Heart right ventricle (tissue), 16 donors: ENCODE measurements at regions of chr2 and their contacts with region 1.

Region 1: DNA sequence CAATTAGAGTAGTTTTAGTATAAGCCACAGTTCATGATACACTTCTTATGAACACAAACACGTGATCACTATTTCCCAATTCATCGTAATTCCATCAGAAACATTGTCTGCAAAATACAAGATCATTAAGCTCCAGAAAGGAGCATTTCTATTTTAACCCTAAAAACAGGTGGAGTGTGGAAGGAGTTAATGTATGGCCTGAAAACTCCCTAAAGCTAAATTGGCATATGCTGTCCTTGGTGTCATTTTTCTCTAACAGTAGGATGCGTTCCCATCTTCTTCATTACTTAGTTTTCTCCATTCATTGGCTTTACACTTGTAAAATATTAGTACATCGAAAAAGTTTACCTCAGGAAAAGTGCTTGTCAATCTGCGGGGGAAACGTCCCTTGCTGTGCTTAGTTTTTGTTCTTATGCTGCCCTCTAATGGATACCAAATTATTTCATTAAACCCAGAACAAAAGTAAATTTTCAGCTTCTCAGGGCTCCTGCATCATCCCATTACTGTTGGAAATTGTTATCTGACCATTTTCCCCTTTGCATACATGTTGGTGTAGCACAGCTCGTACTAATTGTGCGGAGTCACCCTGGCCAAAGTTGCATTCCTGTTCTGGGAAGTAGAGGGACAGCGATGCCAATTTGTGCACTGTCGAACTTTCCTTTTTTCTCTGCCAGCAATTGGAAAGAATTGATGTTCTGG is 153.4 kb downstream of the GPD2 start:
- DNase-seq: peak in 1 of 2 donors; percentile 7
- ATAC-seq: peak in 7 of 8 donors; percentile 30 to 77 (median 53)
- H3K4me3 ChIP-seq: no peak overlapping the region
- H3K27ac ChIP-seq: no peak overlapping the region
- H3K4me1 ChIP-seq: peaks cover 0 to 3% (median 0%) of the 10 kb centered on the region in 9 donors
- H3K27me3 ChIP-seq: no peaks in the 10 kb centered on the region
- CTCF ChIP-seq: peak in 8 of 9 donors; percentile 27 to 76 (median 66)

Region 2: GRCh38 chr2:155377266-155377680 is 1212.3 kb before region 1 on chr2:
- intact Hi-C with region 1: loop called in 4 of 10 experiments (anchors 5 to 10 kb)
- DNase-seq: no peak
- ATAC-seq: no peak
- H3K4me3 ChIP-seq: no peak overlapping the region
- H3K27ac ChIP-seq: no peak overlapping the region
- H3K4me1 ChIP-seq: no peaks in the 10 kb centered on the region
- H3K27me3 ChIP-seq: peaks cover 0 to 5% (median 0%) of the 10 kb centered on the region in 7 donors
- CTCF ChIP-seq: peak in 7 of 9 donors; percentile 25 to 53 (median 41)

Region 3: GRCh38 chr2:156319811-156320485 is 269.6 kb before region 1 on chr2:
- intact Hi-C with region 1: loop called in 1 of 10 experiments (anchors 10 kb)
- DNase-seq: peak; percentile 57 to 76
- ATAC-seq: peak; percentile 75 to 90 (median 88)
- H3K4me3 ChIP-seq: peak overlapping the region; percentile 16 to 62 (median 48)
- H3K27ac ChIP-seq: peak overlapping the region in 9 of 10 donors; percentile 44 to 82 (median 61)
- H3K4me1 ChIP-seq: peaks cover 3 to 42% (median 29%) of the 10 kb centered on the region in 9 donors
- H3K27me3 ChIP-seq: peaks cover 0 to 95% (median 54%) of the 10 kb centered on the region in 7 donors
- CTCF ChIP-seq: peak in 5 of 9 donors; percentile 10 to 41 (median 28)

Region 4: DNA sequence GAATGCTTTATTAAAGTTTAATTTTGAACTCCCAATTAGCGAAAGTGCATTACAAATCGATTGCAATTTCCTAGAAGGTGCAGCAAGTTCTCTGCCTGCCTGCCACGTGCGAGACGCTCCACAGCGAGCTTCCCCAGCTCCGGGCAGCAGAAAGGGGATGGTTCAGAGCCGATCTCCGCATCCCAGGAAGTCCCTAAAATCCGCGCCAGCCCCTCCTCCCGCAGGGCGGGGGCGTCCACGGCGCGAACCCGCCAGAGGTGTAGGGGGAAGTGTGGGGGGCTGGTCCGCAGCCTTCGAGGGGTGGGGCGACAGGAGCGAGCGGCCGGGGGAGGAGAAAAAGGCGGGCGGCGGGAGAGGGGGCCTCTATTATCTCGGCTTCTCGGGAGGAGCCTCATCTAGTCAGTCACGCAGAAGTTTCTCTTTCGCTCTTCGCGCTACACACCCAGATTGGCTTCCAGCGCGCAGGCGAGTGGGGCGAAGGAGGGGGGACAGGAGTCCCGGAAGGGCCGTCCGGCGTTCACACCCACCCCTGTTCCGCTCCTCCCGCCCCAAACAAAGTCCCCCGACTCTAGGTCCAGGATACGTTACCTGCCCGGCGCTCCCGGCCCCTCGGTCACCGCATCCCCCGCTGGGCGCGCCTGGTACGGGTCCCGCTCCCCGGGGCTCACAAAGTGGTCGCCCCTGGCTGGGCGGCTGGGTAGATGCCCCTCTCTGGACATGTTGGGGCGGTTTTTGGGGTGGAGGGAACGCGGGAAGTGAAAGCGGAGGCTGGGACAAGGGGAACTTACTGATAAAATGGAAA is 247.9 kb before region 1 on chr2:
- intact Hi-C with region 1: loop called in 6 of 10 experiments (anchors 5 to 10 kb)
- DNase-seq: peak; percentile 89 to 95
- ATAC-seq: peak; percentile 85 to 94 (median 90)
- H3K4me3 ChIP-seq: peak overlapping the region; percentile 70 to 96 (median 88)
- H3K27ac ChIP-seq: peak overlapping the region; percentile 99 to 100 (median 100)
- H3K4me1 ChIP-seq: peaks cover 0 to 47% (median 27%) of the 10 kb centered on the region in 9 donors
- H3K27me3 ChIP-seq: no peaks in the 10 kb centered on the region
- CTCF ChIP-seq: peak in 1 of 9 donors; percentile 8

Region 5: GRCh38 chr2:156435715-156436496 is 153.6 kb before region 1 on chr2 and contains the start of gene GPD2:
- intact Hi-C with region 1: loop called in 2 of 10 experiments (anchors 10 kb)
- DNase-seq: peak; percentile 92 to 94
- ATAC-seq: peak; percentile 97 to 100 (median 99)
- H3K4me3 ChIP-seq: peak within 1 kb of the TSS; percentile 45 to 92 (median 72)
- H3K27ac ChIP-seq: peak within 1 kb of the TSS; percentile 92 to 100 (median 99)
- H3K4me1 ChIP-seq: peaks cover 5 to 47% (median 24%) of the 10 kb centered on the region in 9 donors
- H3K27me3 ChIP-seq: no peaks in the 10 kb centered on the region
- CTCF ChIP-seq: peak in 5 of 9 donors; percentile 11 to 47 (median 32)
- total RNA-seq, gene GPD2: 10.7 to 20.9 (median 15.5) TPM